ENCODE measurements at regions of chr20 and their contacts with region 1.

Region 1: GRCh38 chr20:20593447-20594170 is 118.8 kb downstream of the RALGAPA2 start:
- DNase-seq: peak; percentile 71
- ATAC-seq: peak; percentile 98
- H3K4me3 ChIP-seq: no peak overlapping the region
- H3K27ac ChIP-seq: no peak overlapping the region
- H3K4me1 ChIP-seq: no peaks in the 10 kb centered on the region
- H3K27me3 ChIP-seq: no peaks in the 10 kb centered on the region
- CTCF ChIP-seq: peak; percentile 74
- EP300 ChIP-seq: no peak
- POLR2A ChIP-seq: no peak
- RAD21 ChIP-seq: peak; percentile 73; the same call in 1 of the 2 replicates

Region 2: GRCh38 chr20:20083807-20084206 is 509.8 kb before region 1 on chr20:
- CTCF ChIA-PET with region 1: interaction called, 20 read pairs
- POLR2A ChIA-PET with region 1: no interaction called
- in situ Hi-C with region 1: loop called (anchors 10 kb)
- intact Hi-C with region 1: loop called (anchors 5 kb)
- DNase-seq: peak; percentile 52
- ATAC-seq: peak; percentile 84
- H3K4me3 ChIP-seq: no peak overlapping the region; a peak in 1 of 6 replicates
- H3K27ac ChIP-seq: no peak overlapping the region
- H3K4me1 ChIP-seq: 0 out of 2 replicates have a peak, but pooled peaks cover 12% of the 10 kb centered on the region
- H3K27me3 ChIP-seq: peaks cover 0 to 17% of the 10 kb centered on the region in 2 experiments; a peak in 2 of 5 replicates
- CTCF ChIP-seq: peak; percentile 73
- EP300 ChIP-seq: no peak
- POLR2A ChIP-seq: no peak
- RAD21 ChIP-seq: peak; percentile 21; the same call in 1 of the 2 replicates

Region 3: GRCh38 chr20:20130399-20130798 is 463.2 kb before region 1 on chr20:
- CTCF ChIA-PET with region 1: interaction called, 8 read pairs
- POLR2A ChIA-PET with region 1: no interaction called
- in situ Hi-C with region 1: no loop called
- intact Hi-C with region 1: loop called (anchors 1 kb)
- DNase-seq: peak; percentile 59
- ATAC-seq: peak; percentile 92
- H3K4me3 ChIP-seq: no peak overlapping the region
- H3K27ac ChIP-seq: no peak overlapping the region
- H3K4me1 ChIP-seq: no peaks in the 10 kb centered on the region
- H3K27me3 ChIP-seq: no peaks in the 10 kb centered on the region
- CTCF ChIP-seq: peak; percentile 84
- EP300 ChIP-seq: no peak
- POLR2A ChIP-seq: no peak
- RAD21 ChIP-seq: peak; percentile 82

Region 4: DNA sequence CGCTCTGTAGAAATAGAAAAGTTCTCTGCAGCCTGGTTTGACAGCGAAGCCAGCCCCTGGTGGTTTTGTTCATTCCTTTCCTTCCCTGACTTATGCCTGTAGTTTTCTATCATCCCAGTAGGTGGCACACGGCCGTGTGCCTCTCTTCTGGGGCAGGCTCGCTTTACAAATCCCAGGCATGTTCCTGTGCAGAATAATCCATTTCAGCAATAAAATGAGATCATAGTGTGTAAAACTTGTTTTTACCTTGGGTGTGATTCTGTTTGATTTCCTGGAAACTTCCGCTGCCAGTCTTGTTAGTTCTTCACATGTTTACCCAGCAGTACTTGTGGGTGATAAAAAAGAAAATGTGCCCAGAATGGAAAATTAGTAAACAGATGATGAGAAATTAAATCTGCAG is 233.1 kb before region 1 on chr20:
- CTCF ChIA-PET with region 1: interaction called, 16 read pairs
- POLR2A ChIA-PET with region 1: no interaction called
- in situ Hi-C with region 1: no loop called
- intact Hi-C with region 1: loop called (anchors 1 kb)
- DNase-seq: peak; percentile 67
- ATAC-seq: peak; percentile 89
- H3K4me3 ChIP-seq: no peak overlapping the region
- H3K27ac ChIP-seq: no peak overlapping the region
- H3K4me1 ChIP-seq: peaks cover 20% of the 10 kb centered on the region; the same call in 1 of the 2 replicates
- H3K27me3 ChIP-seq: peaks cover 11 to 42% of the 10 kb centered on the region in 2 experiments
- CTCF ChIP-seq: peak; percentile 92
- EP300 ChIP-seq: no peak
- POLR2A ChIP-seq: no peak
- RAD21 ChIP-seq: peak; percentile 80

Region 5: GRCh38 chr20:20573787-20574186 is 19.8 kb before region 1 on chr20:
- CTCF ChIA-PET with region 1: no interaction called
- POLR2A ChIA-PET with region 1: no interaction called
- in situ Hi-C with region 1: no loop called
- intact Hi-C with region 1: no loop called
- DNase-seq: no peak
- ATAC-seq: no peak
- H3K4me3 ChIP-seq: no peak overlapping the region
- H3K27ac ChIP-seq: no peak overlapping the region
- H3K4me1 ChIP-seq: peaks cover 11% of the 10 kb centered on the region
- H3K27me3 ChIP-seq: no peaks in the 10 kb centered on the region
- CTCF ChIP-seq: no peak
- EP300 ChIP-seq: no peak
- POLR2A ChIP-seq: no peak
- RAD21 ChIP-seq: no peak

Region 6: DNA sequence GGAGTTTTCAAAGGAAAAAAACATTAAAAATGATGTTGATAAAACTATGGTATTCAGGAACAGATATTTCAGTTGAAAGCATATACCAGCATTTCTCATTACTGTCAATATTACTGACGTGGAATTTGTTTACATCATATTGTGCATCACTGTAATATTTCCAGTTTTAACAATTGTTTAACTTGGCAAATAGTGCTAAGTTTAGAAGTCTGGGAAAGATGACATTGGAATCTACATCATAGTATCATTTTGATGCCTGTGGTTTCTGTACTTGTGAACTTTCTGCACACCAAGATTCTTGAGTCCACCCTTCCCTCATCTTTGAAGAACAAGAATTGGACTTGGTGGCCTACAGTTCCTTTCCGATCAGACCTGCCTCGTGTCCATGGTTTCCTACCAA is 20.8 kb after region 1 on chr20:
- CTCF ChIA-PET with region 1: no interaction called
- POLR2A ChIA-PET with region 1: no interaction called
- in situ Hi-C with region 1: no loop called
- intact Hi-C with region 1: no loop called
- DNase-seq: no peak
- ATAC-seq: no peak
- H3K4me3 ChIP-seq: no peak overlapping the region
- H3K27ac ChIP-seq: no peak overlapping the region
- H3K4me1 ChIP-seq: peaks cover 5% of the 10 kb centered on the region; the same call in 1 of the 2 replicates
- H3K27me3 ChIP-seq: no peaks in the 10 kb centered on the region
- CTCF ChIP-seq: no peak
- EP300 ChIP-seq: no peak
- POLR2A ChIP-seq: no peak
- RAD21 ChIP-seq: no peak

Region 7: DNA sequence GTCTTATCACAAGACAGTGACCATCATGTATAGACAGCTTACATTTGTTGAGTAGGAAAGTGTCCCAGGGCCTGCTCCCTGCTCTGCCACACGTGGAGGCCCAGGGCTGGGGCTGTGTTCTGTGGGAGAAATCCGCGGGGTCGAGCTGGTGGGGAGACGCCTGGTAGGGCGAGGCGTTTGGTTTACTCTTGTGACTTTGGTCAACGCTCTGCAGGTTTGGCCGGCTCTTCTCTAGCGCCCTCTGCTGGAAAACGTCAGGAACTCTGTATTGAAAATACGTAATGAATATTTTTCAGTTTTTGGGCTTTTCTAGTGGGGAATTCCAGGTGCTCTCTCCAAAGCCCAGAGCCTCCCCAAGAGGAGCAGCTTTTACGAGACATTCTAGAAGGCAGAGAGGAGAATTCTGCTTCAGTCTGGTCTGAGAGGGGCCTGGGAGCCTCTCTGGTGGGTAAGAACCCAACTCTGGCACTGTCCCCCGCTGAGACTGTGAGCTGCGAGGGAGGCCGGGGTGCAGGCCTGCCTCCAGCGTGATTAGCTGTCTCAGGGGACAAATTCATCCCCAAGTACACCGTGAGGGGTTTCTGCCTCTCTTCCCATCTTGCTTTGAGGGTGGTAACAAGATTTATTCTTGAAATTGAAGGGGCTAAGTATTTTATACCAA is 231.4 kb after region 1 on chr20:
- CTCF ChIA-PET with region 1: interaction called, 6 read pairs
- POLR2A ChIA-PET with region 1: no interaction called
- in situ Hi-C with region 1: no loop called
- intact Hi-C with region 1: loop called (anchors 1 kb)
- DNase-seq: peak; percentile 70
- ATAC-seq: peak; percentile 75
- H3K4me3 ChIP-seq: 0 out of 6 replicates have a peak overlapping the region, but pooled peaks of 1 of the 3 experiments have one; percentile 19
- H3K27ac ChIP-seq: no peak overlapping the region
- H3K4me1 ChIP-seq: peaks cover 11% of the 10 kb centered on the region; the same call in 1 of the 2 replicates
- H3K27me3 ChIP-seq: peaks cover 0 to 26% of the 10 kb centered on the region in 2 experiments; a peak in 2 of 5 replicates
- CTCF ChIP-seq: peak; percentile 92
- EP300 ChIP-seq: no peak
- POLR2A ChIP-seq: no peak
- RAD21 ChIP-seq: peak; percentile 82

Measured in HepG2 (cell line).